Thyroid gland (tissue), 4 donors: ENCODE measurements at regions of chr16 and their contacts with region 1.

Region 1: GRCh38 chr16:88194397-88195268 is 188.1 kb upstream of the ZNF469 start:
- DNase-seq: no peak
- H3K4me3 ChIP-seq: no peak overlapping the region
- H3K27ac ChIP-seq: no peak overlapping the region
- H3K4me1 ChIP-seq: no peaks in the 10 kb centered on the region
- H3K27me3 ChIP-seq: no peaks in the 10 kb centered on the region
- CTCF ChIP-seq: peak in 1 of 6 experiments; percentile 3
- POLR2A ChIP-seq: no peak

Region 2: DNA sequence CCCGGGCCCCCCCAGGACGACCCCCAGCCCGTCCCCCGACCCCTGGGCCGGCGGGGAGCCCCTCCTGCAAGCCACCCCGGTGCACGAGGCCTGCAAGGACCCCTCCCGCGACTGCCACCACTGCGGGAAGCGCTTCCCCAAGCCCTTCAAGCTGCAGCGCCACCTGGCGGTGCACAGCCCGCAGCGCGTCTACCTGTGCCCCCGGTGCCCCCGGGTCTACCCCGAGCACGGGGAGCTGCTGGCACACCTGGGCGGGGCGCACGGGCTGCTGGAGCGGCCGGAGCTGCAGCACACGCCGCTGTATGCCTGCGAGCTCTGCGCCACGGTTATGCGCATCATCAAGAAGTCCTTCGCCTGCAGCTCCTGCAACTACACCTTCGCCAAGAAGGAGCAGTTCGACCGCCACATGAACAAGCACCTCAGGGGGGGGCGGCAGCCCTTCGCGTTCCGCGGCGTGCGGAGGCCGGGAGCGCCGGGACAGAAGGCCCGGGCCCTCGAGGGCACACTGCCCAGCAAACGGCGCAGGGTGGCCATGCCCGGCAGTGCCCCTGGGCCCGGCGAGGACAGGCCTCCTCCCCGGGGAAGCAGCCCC is 242.8 kb after region 1 on chr16:
- intact Hi-C with region 1: loop called (anchors 5 kb)
- DNase-seq: peak; percentile 49 to 50
- H3K4me3 ChIP-seq: no peak overlapping the region
- H3K27ac ChIP-seq: no peak overlapping the region
- H3K4me1 ChIP-seq: peaks cover 0 to 5% of the 10 kb centered on the region in 2 donors
- H3K27me3 ChIP-seq: no peaks in the 10 kb centered on the region
- CTCF ChIP-seq: peak; percentile 57 to 93 (median 84)
- POLR2A ChIP-seq: no peak